GM10248 (cell line): ENCODE measurements at regions of chr19 and their contacts with region 1.

Region 1: DNA sequence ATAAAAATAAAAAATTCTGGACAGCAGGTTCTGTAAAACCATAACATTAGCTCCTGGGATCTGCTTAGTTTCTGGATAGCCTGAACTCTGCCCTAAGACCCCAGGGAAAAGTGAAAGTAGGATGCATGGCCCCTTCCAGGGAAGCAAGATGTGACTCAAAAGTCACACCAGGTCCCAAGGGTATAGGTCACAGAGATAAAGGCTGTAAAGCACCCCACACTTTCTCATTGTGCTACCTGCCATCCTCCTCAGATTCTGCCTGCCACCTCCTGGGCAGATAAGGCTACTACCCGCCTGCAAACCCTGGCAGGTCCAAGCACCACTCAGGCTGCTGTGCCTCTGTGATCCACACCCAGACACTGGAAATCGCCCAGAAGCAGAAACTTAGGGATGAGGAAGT is 20.6 kb downstream of the FFAR2 start:
- DNase-seq: peak; percentile 84
- CTCF ChIP-seq: peak; percentile 78

Region 2: GRCh38 chr19:35347171-35347929 is 121.3 kb before region 1 on chr19 and contains the start of gene FFAR1:
- CTCF ChIA-PET with region 1: interaction called, 125 read pairs
- POLR2A ChIA-PET with region 1: interaction called, 3 read pairs
- DNase-seq: peak; percentile 78
- CTCF ChIP-seq: no peak

Region 3: DNA sequence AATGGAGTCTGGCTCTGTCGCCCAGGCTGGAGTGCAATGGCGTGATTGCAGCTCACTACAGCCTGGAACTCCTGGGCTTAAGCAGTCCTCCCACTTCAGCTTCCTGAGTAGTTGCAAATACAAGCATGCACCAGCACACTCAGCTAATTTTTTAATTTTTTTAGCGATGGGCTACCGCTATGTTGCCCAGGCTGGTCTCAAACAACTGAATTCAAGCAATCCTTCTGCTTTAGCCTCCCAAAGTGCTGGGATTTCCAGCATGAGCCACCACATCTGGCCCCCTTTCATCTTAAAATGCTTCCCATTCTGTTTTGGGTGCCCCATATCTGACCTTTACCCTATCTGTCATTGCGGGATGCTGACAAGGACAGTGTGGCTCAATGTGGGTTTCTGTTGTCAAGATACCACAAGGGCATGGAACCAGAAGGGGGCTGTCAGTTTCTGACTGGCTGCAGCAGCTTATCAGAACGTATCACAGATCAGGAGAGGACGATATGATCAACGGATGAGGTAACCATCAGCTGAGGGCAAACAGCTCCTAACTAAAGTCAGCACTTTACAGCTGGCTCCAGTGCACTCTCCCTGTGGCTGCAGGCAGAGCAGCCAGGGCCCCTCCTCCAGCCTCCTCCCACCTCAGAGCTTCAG is 65.4 kb before region 1 on chr19:
- CTCF ChIA-PET with region 1: interaction called, 10 read pairs
- POLR2A ChIA-PET with region 1: no interaction called
- DNase-seq: no peak
- CTCF ChIP-seq: no peak

Region 4: DNA sequence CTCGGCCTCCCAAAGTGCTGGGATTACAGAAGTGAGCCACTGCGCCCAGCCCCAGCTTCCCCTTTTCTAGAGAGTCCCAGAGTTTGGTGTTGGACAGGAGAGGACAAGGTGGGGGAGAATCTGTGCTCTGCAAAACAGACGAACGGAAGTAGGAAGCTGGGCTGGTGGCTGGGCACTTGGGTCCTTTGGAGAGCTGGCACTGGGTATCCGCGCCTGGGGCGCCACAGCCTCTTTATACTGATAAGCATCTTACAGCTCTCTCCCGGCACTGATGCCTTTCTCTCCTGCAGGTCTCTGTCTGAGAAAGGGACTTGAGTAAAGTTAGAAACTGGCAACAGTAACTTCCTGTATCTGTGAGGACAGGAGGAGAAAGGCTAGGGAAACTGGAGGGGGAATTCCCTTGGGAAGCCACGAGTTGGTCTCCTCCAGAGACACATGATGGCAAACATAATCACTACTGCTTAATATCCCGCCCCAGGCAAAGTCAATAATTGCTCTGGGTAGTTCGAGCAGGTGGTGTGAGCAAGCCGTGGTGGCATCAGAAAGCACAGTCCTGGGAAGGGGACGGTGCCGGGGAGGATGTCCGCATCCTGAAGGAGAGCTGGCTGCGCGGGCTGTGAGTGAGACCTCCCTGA is 19.5 kb before region 1 on chr19:
- CTCF ChIA-PET with region 1: interaction called, 13 read pairs
- POLR2A ChIA-PET with region 1: no interaction called
- DNase-seq: no peak
- CTCF ChIP-seq: no peak

Region 5: DNA sequence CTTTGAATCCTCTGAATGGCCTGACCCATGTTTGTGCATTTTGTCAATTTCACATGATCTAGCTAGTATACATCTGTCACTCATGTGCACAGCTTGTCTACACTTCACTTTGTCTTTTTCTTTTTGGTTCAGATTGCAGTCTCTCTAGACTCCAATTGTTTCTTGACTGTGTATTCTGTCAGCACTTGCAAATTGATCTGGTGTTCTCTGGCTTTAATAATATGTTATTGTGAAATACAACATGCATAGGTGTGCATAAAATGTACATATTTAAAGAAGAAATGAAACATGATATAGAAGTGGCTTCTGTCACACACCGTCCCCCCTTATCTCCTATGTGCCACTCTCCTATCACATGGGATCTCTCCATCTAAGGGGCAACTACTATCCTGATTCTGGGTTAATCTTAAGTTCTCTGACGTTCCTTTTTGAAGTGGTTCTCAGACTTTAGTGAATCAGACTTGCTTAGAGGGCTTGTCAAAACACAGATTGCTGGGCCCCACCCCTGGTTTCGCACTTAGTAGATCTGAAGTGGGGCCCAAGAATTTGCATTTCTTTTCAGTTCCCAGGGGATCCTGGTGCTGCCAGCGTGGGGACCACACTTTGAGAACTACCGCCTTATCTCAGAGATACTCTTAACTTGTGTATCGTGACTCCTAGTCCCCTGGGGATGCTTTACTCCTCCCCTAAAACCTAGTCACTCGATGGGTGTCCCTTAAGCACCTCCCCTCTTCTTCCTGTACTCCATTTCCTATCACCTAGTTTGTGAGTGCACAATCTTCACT is 15.8 kb after region 1 on chr19:
- CTCF ChIA-PET with region 1: interaction called, 10 read pairs
- POLR2A ChIA-PET with region 1: no interaction called
- DNase-seq: peak; percentile 81
- CTCF ChIP-seq: no peak

Region 6: DNA sequence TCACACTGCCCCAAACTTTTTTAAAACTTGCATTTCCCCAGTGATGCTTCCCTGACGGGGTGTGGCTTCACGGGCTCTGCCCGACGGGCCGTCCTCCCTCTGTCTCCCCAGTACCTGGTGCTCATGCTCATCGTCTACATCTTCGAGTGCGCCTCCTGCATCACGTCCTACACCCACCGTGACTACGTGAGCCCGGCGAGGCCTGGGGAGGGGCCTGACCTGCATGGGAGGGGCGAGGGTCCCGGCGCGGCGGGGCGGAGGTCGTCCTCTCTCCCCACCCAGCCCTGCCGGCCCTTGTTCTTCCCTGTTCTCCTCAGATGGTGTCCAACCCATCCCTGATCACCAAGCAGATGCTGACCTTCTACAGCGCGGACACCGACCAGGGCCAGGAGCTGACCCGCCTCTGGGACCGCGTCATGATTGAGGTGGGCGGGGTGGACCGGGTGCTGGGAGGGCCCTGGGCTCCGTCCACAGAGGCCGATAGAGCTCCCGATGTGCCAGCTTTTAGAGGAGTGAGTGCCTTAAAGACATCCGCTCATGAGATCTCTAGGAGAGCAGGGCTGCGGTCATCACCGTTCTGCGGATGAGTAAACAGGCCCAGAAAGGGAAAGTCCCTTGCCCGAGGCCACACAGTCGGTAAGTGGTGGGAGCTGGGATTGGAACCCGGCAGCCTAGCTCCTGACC is 204.6 kb after region 1 on chr19:
- CTCF ChIA-PET with region 1: no interaction called
- POLR2A ChIA-PET with region 1: no interaction called
- DNase-seq: peak; percentile 77
- CTCF ChIP-seq: no peak